ENCODE measurements at regions of chr17 and their contacts with region 1.

Region 1: DNA sequence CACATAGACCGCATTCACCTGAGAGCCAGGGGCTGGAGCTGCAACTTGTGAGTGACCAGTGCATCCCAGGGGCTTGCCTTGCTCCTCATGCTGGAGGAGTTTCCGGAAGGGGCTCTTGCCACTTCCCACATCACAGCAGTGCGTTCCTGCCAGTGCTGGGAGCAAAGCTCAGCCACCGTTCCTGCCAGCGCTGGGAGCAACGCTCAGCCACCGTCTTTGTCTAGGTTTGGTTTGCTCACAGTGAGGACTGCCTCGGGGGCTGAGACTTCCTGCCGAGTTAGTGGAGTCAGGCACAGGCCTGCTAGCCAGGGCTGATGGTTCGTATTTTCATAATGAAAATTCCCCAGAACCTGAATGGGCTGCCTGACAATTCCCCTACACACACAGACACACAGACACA is 5.4 kb upstream of the CHRNE start:
- DNase-seq: peak in 1 of 9 experiments; percentile 29
- ATAC-seq: no peak
- H3K4me3 ChIP-seq: no peak overlapping the region
- H3K4me3 Mint-ChIP-seq: no peak overlapping the region
- H3K27ac ChIP-seq: no peak overlapping the region
- H3K27ac Mint-ChIP-seq: no peak overlapping the region
- H3K4me1 ChIP-seq: peaks cover 22% of the 10 kb centered on the region
- H3K4me1 Mint-ChIP-seq: peaks cover 7% of the 10 kb centered on the region
- H3K27me3 ChIP-seq: no peaks in the 10 kb centered on the region
- H3K27me3 Mint-ChIP-seq: no peaks in the 10 kb centered on the region
- CTCF ChIP-seq: no peak

Region 2: DNA sequence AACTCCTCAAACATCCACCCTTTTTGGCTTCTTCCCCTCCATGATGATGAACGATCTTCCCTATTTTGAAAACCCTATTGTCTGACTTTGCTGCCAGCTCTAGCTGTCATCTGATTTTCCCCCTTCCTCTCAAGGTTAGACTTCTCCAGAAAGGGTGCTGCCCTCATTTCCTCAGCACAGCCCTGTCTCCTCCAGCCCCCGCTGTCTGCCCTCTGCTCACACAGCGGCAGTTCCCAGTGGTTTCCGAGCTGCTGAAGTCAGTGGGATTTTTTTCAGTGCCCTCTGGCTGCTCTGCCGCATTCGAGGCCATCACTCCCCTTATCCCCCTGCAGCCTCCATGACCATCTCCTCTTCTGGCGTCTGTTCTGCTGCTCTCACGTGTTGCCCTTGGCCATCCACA is 35.5 kb before region 1 on chr17:
- CTCF ChIA-PET with region 1: no interaction called
- POLR2A ChIA-PET with region 1: no interaction called
- intact Hi-C with region 1: no loop called
- DNase-seq: no peak
- ATAC-seq: no peak
- H3K4me3 ChIP-seq: no peak overlapping the region
- H3K4me3 Mint-ChIP-seq: no peak overlapping the region
- H3K27ac ChIP-seq: no peak overlapping the region
- H3K27ac Mint-ChIP-seq: no peak overlapping the region
- H3K4me1 ChIP-seq: no peaks in the 10 kb centered on the region
- H3K4me1 Mint-ChIP-seq: no peaks in the 10 kb centered on the region
- H3K27me3 ChIP-seq: no peaks in the 10 kb centered on the region
- H3K27me3 Mint-ChIP-seq: no peaks in the 10 kb centered on the region
- CTCF ChIP-seq: no peak

Region 3: GRCh38 chr17:4932756-4933155 is 24.5 kb after region 1 on chr17:
- CTCF ChIA-PET with region 1: interaction called, 4 read pairs
- POLR2A ChIA-PET with region 1: interaction called, 3 read pairs
- intact Hi-C with region 1: loop called (anchors 1 kb)
- DNase-seq: no peak
- ATAC-seq: no peak
- H3K4me3 ChIP-seq: no peak overlapping the region
- H3K4me3 Mint-ChIP-seq: no peak overlapping the region
- H3K27ac ChIP-seq: no peak overlapping the region
- H3K27ac Mint-ChIP-seq: no peak overlapping the region
- H3K4me1 ChIP-seq: peaks cover 13% of the 10 kb centered on the region
- H3K4me1 Mint-ChIP-seq: peaks cover 19% of the 10 kb centered on the region
- H3K27me3 ChIP-seq: no peaks in the 10 kb centered on the region
- H3K27me3 Mint-ChIP-seq: no peaks in the 10 kb centered on the region
- CTCF ChIP-seq: no peak

Region 4: GRCh38 chr17:4956493-4957061 is 48.3 kb after region 1 on chr17:
- CTCF ChIA-PET with region 1: interaction called, 19 read pairs
- POLR2A ChIA-PET with region 1: interaction called, 3 read pairs
- intact Hi-C with region 1: loop called in 1 of 2 experiments (anchors 1 kb)
- DNase-seq: peak in 6 of 9 experiments; percentile 49 to 66 (median 54)
- ATAC-seq: peak; percentile 17
- H3K4me3 ChIP-seq: no peak overlapping the region
- H3K4me3 Mint-ChIP-seq: no peak overlapping the region
- H3K27ac ChIP-seq: no peak overlapping the region
- H3K27ac Mint-ChIP-seq: no peak overlapping the region
- H3K4me1 ChIP-seq: no peaks in the 10 kb centered on the region
- H3K4me1 Mint-ChIP-seq: peaks cover 8% of the 10 kb centered on the region
- H3K27me3 ChIP-seq: no peaks in the 10 kb centered on the region
- H3K27me3 Mint-ChIP-seq: no peaks in the 10 kb centered on the region
- CTCF ChIP-seq: no peak

Region 5: DNA sequence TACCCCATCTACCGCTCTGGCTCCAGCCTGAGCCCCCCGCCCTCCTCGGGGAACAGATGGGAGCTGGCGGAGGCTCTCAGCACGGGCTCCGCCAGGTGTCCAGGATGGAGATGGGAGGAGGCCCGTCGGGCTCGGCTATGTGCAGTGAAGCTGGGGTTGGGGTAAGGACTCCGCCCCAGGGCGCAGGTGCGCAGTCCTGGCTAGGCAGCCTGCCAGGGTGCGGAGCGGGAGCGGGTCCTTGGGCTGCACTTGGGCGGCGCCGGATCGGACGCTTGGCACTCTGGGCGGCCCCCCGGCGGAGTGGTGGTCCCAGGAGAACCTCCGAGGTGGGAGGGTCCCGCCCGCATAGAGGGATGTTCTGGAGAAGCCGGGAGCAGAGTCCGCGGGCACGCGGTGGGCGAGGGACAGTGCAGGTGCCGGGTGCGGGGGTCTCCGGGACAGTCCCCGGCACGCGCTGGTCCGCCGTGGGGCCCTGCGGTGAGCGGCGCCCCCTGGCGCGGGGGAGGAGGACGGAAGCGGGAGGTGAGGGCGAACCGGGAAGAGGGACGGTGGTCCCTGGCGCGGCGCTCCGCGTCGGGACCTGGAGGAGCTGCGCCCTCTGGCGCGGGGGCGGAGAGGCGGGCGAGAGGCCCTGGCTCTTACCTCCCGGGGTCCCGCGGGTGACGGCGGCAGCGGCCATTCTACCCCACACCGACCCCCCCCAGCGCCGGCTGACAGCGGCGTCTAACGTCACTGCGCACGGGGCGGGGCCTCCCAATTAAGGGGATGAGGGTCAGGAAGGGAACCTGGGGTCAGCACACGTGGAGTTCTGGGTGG is 78.9 kb after region 1 on chr17 and contains the start of gene CAMTA2:
- CTCF ChIA-PET with region 1: interaction called, 30 read pairs
- POLR2A ChIA-PET with region 1: interaction called, 5 read pairs
- intact Hi-C with region 1: loop called (anchors 1 kb)
- DNase-seq: peak; percentile 69 to 92 (median 91)
- ATAC-seq: peak; percentile 91
- H3K4me3 ChIP-seq: peak within 1 kb of the TSS; percentile 98 to 100
- H3K4me3 Mint-ChIP-seq: peak within 1 kb of the TSS; percentile 91
- H3K27ac ChIP-seq: peak within 1 kb of the TSS; percentile 80 to 98
- H3K27ac Mint-ChIP-seq: peak within 1 kb of the TSS; percentile 95
- H3K4me1 ChIP-seq: peaks cover 27% of the 10 kb centered on the region
- H3K4me1 Mint-ChIP-seq: peaks cover 38% of the 10 kb centered on the region
- H3K27me3 ChIP-seq: no peaks in the 10 kb centered on the region
- H3K27me3 Mint-ChIP-seq: no peaks in the 10 kb centered on the region
- CTCF ChIP-seq: peak; percentile 76
- total RNA-seq, gene CAMTA2: 40.1 to 42.3 TPM

Region 6: GRCh38 chr17:5019475-5019956 is 111.2 kb after region 1 on chr17:
- CTCF ChIA-PET with region 1: interaction called, 11 read pairs
- POLR2A ChIA-PET with region 1: interaction called, 3 read pairs
- intact Hi-C with region 1: loop called in 1 of 2 experiments (anchors 1 kb)
- DNase-seq: peak in 8 of 9 experiments; percentile 32 to 68 (median 52)
- ATAC-seq: peak; percentile 95
- H3K4me3 ChIP-seq: no peak overlapping the region
- H3K4me3 Mint-ChIP-seq: no peak overlapping the region
- H3K27ac ChIP-seq: no peak overlapping the region
- H3K27ac Mint-ChIP-seq: peak overlapping the region; percentile 75
- H3K4me1 ChIP-seq: no peaks in the 10 kb centered on the region
- H3K4me1 Mint-ChIP-seq: peaks cover 7% of the 10 kb centered on the region
- H3K27me3 ChIP-seq: no peaks in the 10 kb centered on the region
- H3K27me3 Mint-ChIP-seq: no peaks in the 10 kb centered on the region
- CTCF ChIP-seq: no peak

Measured in CD8-positive, alpha-beta T cell (primary cell).